GM12878 (cell line): ENCODE measurements at regions of chr3 and their contacts with region 1.

Region 1: DNA sequence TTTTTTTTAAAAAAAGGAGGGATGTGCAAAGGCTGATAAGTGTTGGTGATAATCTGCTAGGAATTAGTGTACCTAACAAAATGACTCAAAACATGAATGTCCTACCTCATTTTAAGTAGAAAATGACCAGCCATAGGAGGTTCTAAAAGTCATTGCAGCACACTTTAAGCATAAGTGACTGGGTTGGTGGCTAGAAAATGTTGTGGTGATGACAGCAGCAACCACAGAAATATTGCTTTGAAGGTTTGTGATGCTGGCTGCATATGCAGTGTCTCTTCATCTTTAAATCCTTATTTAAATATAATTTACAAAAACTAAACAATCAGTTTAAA is 55.2 kb downstream of the CMSS1 start:
- DNase-seq: peak; percentile 50
- ATAC-seq: peak; percentile 78
- H3K4me3 ChIP-seq: 0 out of 2 replicates have a peak overlapping the region, but pooled peaks have one; percentile 38
- H3K27ac ChIP-seq: peak overlapping the region; percentile 17; the same call in 1 of the 2 replicates
- H3K4me1 ChIP-seq: peaks cover 26% of the 10 kb centered on the region
- H3K27me3 ChIP-seq: no peaks in the 10 kb centered on the region
- CTCF ChIP-seq: no peak
- EP300 ChIP-seq: peak in 1 of 2 experiments; percentile 63; a peak in 1 of 4 replicates
- POLR2A ChIP-seq: no peak
- RAD21 ChIP-seq: no peak

Region 2: GRCh38 chr3:99720985-99721632 is 151.8 kb before region 1 on chr3:
- CTCF ChIA-PET with region 1: no interaction called
- POLR2A ChIA-PET with region 1: no interaction called
- RAD21 ChIA-PET with region 1: no interaction called
- SMC1A ChIA-PET with region 1: no interaction called
- in situ Hi-C with region 1: no loop called
- intact Hi-C with region 1: no loop called
- DNase-seq: no peak
- ATAC-seq: no peak
- H3K4me3 ChIP-seq: no peak overlapping the region
- H3K27ac ChIP-seq: no peak overlapping the region
- H3K4me1 ChIP-seq: no peaks in the 10 kb centered on the region
- H3K27me3 ChIP-seq: no peaks in the 10 kb centered on the region; a peak in 1 of 4 replicates
- CTCF ChIP-seq: no peak
- EP300 ChIP-seq: no peak
- POLR2A ChIP-seq: no peak
- RAD21 ChIP-seq: no peak

Region 3: GRCh38 chr3:99859825-99860224 is 13.1 kb before region 1 on chr3:
- CTCF ChIA-PET with region 1: interaction called, 4 read pairs
- POLR2A ChIA-PET with region 1: interaction called, 6 read pairs
- RAD21 ChIA-PET with region 1: interaction called, 3 read pairs
- SMC1A ChIA-PET with region 1: interaction called, 13 read pairs
- in situ Hi-C with region 1: no loop called
- intact Hi-C with region 1: no loop called
- DNase-seq: no peak
- ATAC-seq: no peak
- H3K4me3 ChIP-seq: no peak overlapping the region
- H3K27ac ChIP-seq: no peak overlapping the region
- H3K4me1 ChIP-seq: peaks cover 8% of the 10 kb centered on the region
- H3K27me3 ChIP-seq: no peaks in the 10 kb centered on the region
- CTCF ChIP-seq: no peak
- EP300 ChIP-seq: no peak
- POLR2A ChIP-seq: no peak
- RAD21 ChIP-seq: no peak